Ascending aorta (tissue), 2 donors: ENCODE measurements at regions of chr10 and their contacts with region 1.

Region 1: GRCh38 chr10:91298224-91298871 is 77.9 kb downstream of the PCGF5 start:
- DNase-seq: peak in 1 of 2 donors; percentile 82
- H3K4me3 ChIP-seq: peak overlapping the region; percentile 62 to 68
- H3K27ac ChIP-seq: no peak overlapping the region
- H3K4me1 ChIP-seq: peaks cover 5 to 11% of the 10 kb centered on the region in 2 donors
- H3K27me3 ChIP-seq: no peaks in the 10 kb centered on the region
- CTCF ChIP-seq: peak; percentile 93 to 97 (median 95)

Region 2: DNA sequence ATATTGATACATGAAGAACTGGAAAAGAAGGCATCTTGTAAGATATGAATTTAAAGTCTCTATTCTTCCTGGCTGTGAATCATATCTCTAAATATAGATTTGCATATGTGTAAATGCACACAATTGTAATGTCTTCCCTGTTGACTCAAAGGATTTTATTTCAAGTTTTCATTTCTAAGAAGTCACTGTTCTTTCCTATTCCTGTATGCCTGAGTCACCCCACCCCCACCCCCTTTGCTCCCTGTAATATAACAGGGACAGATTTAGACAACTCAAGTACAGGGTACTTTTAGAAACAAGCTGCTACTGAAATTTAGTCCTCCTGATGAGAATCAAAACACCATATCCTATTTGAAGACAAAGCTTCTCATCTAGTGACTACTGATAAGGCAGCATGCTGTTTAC is 68.8 kb after region 1 on chr10:
- intact Hi-C with region 1: loop called (anchors 1 kb)
- DNase-seq: no peak
- H3K4me3 ChIP-seq: no peak overlapping the region
- H3K27ac ChIP-seq: no peak overlapping the region
- H3K4me1 ChIP-seq: no peaks in the 10 kb centered on the region
- H3K27me3 ChIP-seq: no peaks in the 10 kb centered on the region
- CTCF ChIP-seq: no peak

Region 3: GRCh38 chr10:91381257-91381891 is 83.0 kb after region 1 on chr10:
- intact Hi-C with region 1: loop called (anchors 5 kb)
- DNase-seq: no peak
- H3K4me3 ChIP-seq: peak overlapping the region in 1 of 2 donors; percentile 38
- H3K27ac ChIP-seq: no peak overlapping the region
- H3K4me1 ChIP-seq: no peaks in the 10 kb centered on the region
- H3K27me3 ChIP-seq: no peaks in the 10 kb centered on the region
- CTCF ChIP-seq: no peak

Region 4: GRCh38 chr10:91487911-91488582 is 189.7 kb after region 1 on chr10:
- intact Hi-C with region 1: loop called (anchors 10 kb)
- DNase-seq: no peak
- H3K4me3 ChIP-seq: no peak overlapping the region
- H3K27ac ChIP-seq: no peak overlapping the region
- H3K4me1 ChIP-seq: no peaks in the 10 kb centered on the region
- H3K27me3 ChIP-seq: no peaks in the 10 kb centered on the region
- CTCF ChIP-seq: no peak